ENCODE measurements at regions of chr19 and their contacts with region 1.

Region 1: GRCh38 chr19:50556282-50557008 is 11.8 kb downstream of the LRRC4B start:
- DNase-seq: peak; percentile 4
- H3K4me3 ChIP-seq: peak overlapping the region; percentile 39
- H3K27me3 ChIP-seq: peaks cover 4% of the 10 kb centered on the region; the same call in 1 of the 2 replicates
- CTCF ChIP-seq: peak; percentile 96

Region 2: GRCh38 chr19:50531118-50531612 is 25.3 kb before region 1 on chr19:
- CTCF ChIA-PET with region 1: interaction called, 37 read pairs
- POLR2A ChIA-PET with region 1: no interaction called
- DNase-seq: no peak
- H3K4me3 ChIP-seq: no peak overlapping the region
- H3K27me3 ChIP-seq: no peaks in the 10 kb centered on the region
- CTCF ChIP-seq: no peak

Region 3: GRCh38 chr19:50537762-50538230 is 18.6 kb before region 1 on chr19:
- CTCF ChIA-PET with region 1: interaction called, 37 read pairs
- POLR2A ChIA-PET with region 1: no interaction called
- DNase-seq: peak; percentile 7
- H3K4me3 ChIP-seq: no peak overlapping the region
- H3K27me3 ChIP-seq: no peaks in the 10 kb centered on the region
- CTCF ChIP-seq: peak; percentile 84

Region 4: DNA sequence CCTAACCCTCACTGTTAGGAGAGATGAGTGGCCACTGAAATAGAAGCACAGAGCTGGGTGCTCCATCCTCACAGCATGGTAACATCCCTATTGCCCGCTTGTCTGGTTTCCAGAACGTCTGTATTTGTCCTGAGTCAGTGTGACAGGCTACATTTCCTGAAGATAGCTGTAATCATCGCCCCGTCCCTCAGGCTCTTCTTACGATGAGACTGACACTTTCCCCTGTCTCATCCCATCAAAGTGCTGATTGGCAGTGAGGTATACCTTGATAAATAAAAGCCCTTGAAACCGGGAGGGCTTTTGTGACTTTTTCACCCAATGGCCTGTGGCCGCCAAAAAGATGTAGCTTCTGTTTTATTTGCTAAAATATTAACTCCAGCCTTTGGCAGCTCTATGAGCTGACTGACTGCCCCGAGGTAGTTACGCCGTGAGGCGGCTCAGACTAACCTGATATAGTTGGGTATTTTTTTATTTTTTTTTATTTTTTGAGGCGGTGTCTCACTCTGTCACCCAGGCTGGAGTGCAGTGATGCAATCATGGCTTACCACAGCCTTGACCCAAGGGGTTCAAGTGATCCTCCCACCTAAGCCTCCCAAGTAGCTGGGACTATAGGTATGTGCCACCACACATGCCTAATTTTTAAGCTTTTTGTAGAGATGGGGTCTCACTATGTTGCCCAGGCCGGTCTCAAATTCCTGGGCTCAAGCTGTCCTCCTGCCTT is 17.5 kb after region 1 on chr19:
- CTCF ChIA-PET with region 1: interaction called, 17 read pairs
- POLR2A ChIA-PET with region 1: no interaction called
- DNase-seq: no peak
- H3K4me3 ChIP-seq: no peak overlapping the region
- H3K27me3 ChIP-seq: 0 out of 2 replicates have a peak, but pooled peaks cover 2% of the 10 kb centered on the region
- CTCF ChIP-seq: no peak

Region 5: GRCh38 chr19:50580970-50581634 is 24.7 kb after region 1 on chr19:
- CTCF ChIA-PET with region 1: interaction called, 16 read pairs
- POLR2A ChIA-PET with region 1: no interaction called
- DNase-seq: no peak
- H3K4me3 ChIP-seq: no peak overlapping the region
- H3K27me3 ChIP-seq: no peaks in the 10 kb centered on the region
- CTCF ChIP-seq: no peak